Dorsolateral prefrontal cortex (tissue), 120 donors: ENCODE measurements at regions of chr6 and their contacts with region 1.

Region 1: GRCh38 chr6:147506704-147507114 is 1.8 kb upstream of the SAMD5 start:
- DNase-seq: peak; percentile 31 to 83 (median 72)
- H3K4me3 ChIP-seq: peak overlapping the region; percentile 41 to 84 (median 69)
- H3K27ac ChIP-seq: peak overlapping the region in 5 of 59 donors; percentile 29 to 77 (median 45)
- H3K27me3 ChIP-seq: peaks cover 0 to 27% (median 3%) of the 10 kb centered on the region in 45 donors
- CTCF ChIP-seq: peak; percentile 63 to 93 (median 80)

Region 2: DNA sequence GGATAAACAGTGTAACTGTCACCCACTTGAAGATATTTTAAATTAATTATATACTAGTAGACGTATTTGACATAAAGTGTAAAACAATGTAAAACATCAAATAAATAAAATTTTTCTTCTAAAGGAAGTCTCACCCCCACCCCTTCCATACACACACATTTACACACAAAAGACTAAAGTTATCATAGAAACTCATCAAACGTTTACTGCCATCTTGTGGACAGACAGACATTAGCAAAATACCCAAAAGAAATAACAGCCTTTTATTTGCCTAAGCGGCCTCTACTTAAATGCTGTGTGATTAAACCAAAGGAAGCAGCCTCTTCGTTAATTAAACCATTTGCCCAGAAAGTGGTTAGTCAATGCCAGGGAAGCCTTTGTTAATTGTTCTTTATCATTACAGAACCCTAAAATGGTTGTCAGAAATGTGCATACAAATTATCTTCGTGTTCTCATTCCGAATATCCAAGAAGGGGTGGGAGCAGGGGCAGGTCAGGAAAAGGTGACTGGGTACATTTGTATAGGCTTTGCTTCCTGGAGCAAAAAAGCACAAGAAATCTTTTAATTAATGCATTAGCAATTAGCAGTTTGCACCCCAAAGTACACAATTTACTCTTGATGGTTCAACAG is 659.7 kb after region 1 on chr6:
- intact Hi-C with region 1: loop called (anchors 1 to 2 kb)
- DNase-seq: no peak
- H3K4me3 ChIP-seq: no peak overlapping the region
- H3K27ac ChIP-seq: no peak overlapping the region
- H3K27me3 ChIP-seq: peaks cover 0 to 4% (median 0%) of the 10 kb centered on the region in 45 donors
- CTCF ChIP-seq: peak; percentile 53 to 92 (median 79)

Region 3: GRCh38 chr6:148240461-148240840 is 733.7 kb after region 1 on chr6:
- intact Hi-C with region 1: loop called in 1 of 2 experiments (anchors 10 kb)
- DNase-seq: peak in 5 of 10 donors; percentile 18 to 51 (median 47)
- H3K4me3 ChIP-seq: no peak overlapping the region
- H3K27ac ChIP-seq: peak overlapping the region in 15 of 59 donors; percentile 1 to 61 (median 31)
- H3K27me3 ChIP-seq: no peaks in the 10 kb centered on the region
- CTCF ChIP-seq: no peak